ENCODE measurements at regions of chr1 and their contacts with region 1.

Region 1: DNA sequence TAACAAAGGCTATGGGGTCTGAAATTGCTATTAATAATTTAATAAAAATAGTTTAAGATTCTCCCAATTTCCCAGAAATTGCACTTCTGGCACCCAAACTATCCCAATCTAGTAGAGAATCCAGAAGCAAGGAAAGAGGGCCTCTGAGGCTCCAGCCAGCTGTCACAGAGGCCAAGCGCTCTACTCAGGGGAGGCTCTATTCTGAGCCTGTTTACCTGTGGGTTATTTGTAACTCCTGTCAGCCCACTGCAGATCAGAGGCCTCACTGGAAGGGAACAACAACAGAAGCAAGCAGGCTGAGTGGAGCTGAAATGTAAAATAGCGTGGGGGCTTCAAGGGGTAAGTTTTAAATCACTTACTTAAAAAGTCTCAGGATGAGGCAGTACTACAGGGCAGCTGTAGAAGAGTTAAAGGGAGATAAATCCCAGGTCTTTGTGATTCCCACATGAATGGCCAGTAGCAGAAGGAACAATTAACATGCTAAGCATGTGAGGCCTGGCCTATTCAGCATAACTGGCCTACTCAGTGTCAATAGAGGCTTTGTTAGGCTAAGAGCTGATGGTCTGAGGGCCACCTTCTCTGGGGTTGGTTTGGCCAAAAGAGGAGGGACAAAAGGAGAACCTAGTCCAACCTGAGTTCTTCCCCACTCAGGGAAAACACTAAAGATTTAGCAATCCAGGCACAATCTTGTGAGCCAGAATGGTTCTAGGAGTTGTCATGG is 12.8 kb downstream of the ZNF687 start:
- DNase-seq: no peak
- H3K4me3 ChIP-seq: no peak overlapping the region
- H3K27ac ChIP-seq: no peak overlapping the region
- H3K4me1 ChIP-seq: no peaks in the 10 kb centered on the region
- H3K27me3 ChIP-seq: no peaks in the 10 kb centered on the region
- CTCF ChIP-seq: no peak
- POLR2A ChIP-seq: no peak

Region 2: GRCh38 chr1:151340870-151341754 is 46.2 kb after region 1 on chr1:
- intact Hi-C with region 1: loop called (anchors 5 kb)
- DNase-seq: peak in 6 of 7 donors; percentile 38 to 64 (median 61)
- H3K4me3 ChIP-seq: no peak overlapping the region
- H3K27ac ChIP-seq: peak overlapping the region in 2 of 5 donors; percentile 42
- H3K4me1 ChIP-seq: peaks cover 4 to 5% of the 10 kb centered on the region in 2 donors
- H3K27me3 ChIP-seq: no peaks in the 10 kb centered on the region
- CTCF ChIP-seq: peak; percentile 62 to 88 (median 76)
- POLR2A ChIP-seq: no peak